Body of pancreas (tissue), 4 donors: ENCODE measurements at regions of chr10 and their contacts with region 1.

Region 1: DNA sequence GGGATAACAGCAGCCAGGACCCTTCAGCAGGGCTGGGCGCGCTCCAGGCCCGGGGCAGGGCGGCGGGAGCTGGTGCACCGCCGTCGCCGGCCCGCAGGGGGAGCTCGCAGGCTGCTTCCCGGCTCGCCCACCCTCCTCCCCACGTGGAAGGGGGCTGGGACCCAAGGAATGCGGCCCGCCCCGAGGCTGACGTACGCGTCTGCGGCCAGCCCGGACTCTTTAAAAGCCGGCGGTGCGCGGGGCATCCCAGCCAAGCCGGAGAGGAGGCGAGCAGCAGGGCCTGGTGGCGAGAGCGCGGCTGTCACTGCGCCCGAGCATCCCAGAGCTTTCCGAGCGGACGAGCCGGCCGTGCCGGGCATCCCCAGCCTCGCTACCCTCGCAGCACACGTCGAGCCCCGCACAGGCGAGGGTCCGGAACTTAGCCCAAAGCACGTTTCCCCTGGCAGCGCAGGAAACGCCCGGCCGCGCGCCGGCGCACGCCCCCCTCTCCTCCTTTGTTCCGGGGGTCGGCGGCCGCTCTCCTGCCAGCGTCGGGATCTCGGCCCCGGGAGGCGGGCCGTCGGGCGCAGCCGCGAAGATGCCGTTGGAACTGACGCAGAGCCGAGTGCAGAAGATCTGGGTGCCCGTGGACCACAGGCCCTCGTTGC is at the start of gene PFKFB3:
- DNase-seq: peak; percentile 95 to 97 (median 96)
- ATAC-seq: peak; percentile 88
- H3K4me3 ChIP-seq: peak within 1 kb of the TSS; percentile 28 to 80
- H3K27ac ChIP-seq: peak within 1 kb of the TSS; percentile 87 to 95 (median 92)
- H3K4me1 ChIP-seq: peaks cover 57% of the 10 kb centered on the region
- H3K27me3 ChIP-seq: no peaks in the 10 kb centered on the region
- CTCF ChIP-seq: peak; percentile 94 to 99 (median 99)
- POLR2A ChIP-seq: peak; percentile 99
- total RNA-seq, gene PFKFB3: 26.5 to 137 TPM

Region 2: DNA sequence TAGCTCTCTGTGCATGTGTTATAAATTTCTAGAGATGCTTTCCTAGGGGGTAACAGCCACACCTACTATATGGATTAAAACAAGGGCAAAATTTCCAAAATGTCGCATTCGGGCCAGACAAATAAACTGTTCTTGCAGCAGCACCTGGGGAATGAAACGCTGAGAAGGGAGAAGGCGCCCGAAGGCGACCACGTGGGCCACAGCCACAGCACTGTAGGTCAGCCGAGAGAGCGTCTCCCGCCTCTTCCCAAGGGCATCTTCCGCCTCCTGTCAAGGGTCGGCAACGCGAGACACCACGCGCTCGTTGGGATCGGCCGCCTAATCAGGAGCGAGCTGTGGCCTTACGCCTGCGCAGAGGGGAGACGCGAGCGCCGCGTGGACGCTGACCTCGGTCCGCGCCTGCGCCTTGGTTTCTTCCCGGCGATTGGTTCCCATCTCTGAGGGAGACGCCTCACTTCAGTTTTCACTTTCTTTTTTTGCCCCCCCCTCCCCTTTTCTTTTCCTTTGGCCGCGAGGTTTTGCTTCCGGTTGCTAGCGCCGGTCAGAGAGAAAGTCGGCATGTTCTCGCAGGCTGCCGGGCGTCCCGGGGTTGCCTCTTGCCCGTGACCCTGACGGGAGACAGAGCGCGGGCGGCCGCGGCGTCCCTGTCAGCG is 518.4 kb before region 1 on chr10 and contains the start of gene TASOR2:
- intact Hi-C with region 1: no loop called
- DNase-seq: peak; percentile 98
- ATAC-seq: peak; percentile 99
- H3K4me3 ChIP-seq: peak within 1 kb of the TSS; percentile 53 to 96
- H3K27ac ChIP-seq: peak within 1 kb of the TSS; percentile 66 to 92 (median 78)
- H3K4me1 ChIP-seq: peaks cover 16% of the 10 kb centered on the region
- H3K27me3 ChIP-seq: no peaks in the 10 kb centered on the region
- CTCF ChIP-seq: no peak
- POLR2A ChIP-seq: peak; percentile 43 to 73 (median 67)
- total RNA-seq, gene TASOR2: 47.2 to 114 TPM

Region 3: GRCh38 chr10:5927306-5927705 is 275.5 kb before region 1 on chr10:
- intact Hi-C with region 1: no loop called
- DNase-seq: no peak
- ATAC-seq: no peak
- H3K4me3 ChIP-seq: no peak overlapping the region
- H3K27ac ChIP-seq: no peak overlapping the region
- H3K4me1 ChIP-seq: no peaks in the 10 kb centered on the region
- H3K27me3 ChIP-seq: no peaks in the 10 kb centered on the region
- CTCF ChIP-seq: no peak
- POLR2A ChIP-seq: no peak

Region 4: DNA sequence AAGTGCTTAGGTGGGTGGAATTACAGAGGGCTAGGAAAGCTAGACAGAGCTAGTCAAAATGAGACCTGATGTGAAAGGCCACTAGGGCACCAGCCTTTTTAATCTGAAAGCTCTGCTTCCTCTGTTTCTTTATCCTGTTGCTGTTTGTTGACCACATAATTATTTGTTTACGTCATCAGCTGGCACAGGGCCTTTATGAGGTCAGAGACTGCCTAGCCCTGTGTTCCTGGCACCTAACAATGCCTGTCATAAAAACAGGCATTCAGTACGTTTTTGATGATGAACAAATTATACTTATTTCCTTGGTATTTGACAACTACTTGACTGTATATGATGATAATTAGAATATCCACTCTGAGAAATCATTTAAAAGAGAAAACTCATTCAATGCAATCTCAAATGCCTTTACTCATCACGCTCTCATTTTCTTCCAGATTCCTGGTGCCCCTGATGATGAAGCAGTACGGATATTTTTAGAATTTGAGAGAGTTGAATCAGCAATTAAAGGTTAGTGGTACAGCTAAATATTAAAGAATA is 87.9 kb before region 1 on chr10:
- intact Hi-C with region 1: no loop called
- DNase-seq: peak; percentile 29 to 60 (median 48)
- ATAC-seq: peak; percentile 59
- H3K4me3 ChIP-seq: no peak overlapping the region
- H3K27ac ChIP-seq: peak overlapping the region in 1 of 4 donors; percentile 32
- H3K4me1 ChIP-seq: peaks cover 14% of the 10 kb centered on the region
- H3K27me3 ChIP-seq: no peaks in the 10 kb centered on the region
- CTCF ChIP-seq: no peak
- POLR2A ChIP-seq: no peak

Region 5: GRCh38 chr10:6164271-6165095 is 38.3 kb before region 1 on chr10:
- intact Hi-C with region 1: loop called (anchors 5 kb)
- DNase-seq: no peak
- ATAC-seq: peak; percentile 6
- H3K4me3 ChIP-seq: peak overlapping the region; percentile 31 to 69
- H3K27ac ChIP-seq: peak overlapping the region; percentile 88 to 96 (median 96)
- H3K4me1 ChIP-seq: peaks cover 37% of the 10 kb centered on the region
- H3K27me3 ChIP-seq: no peaks in the 10 kb centered on the region
- CTCF ChIP-seq: no peak
- POLR2A ChIP-seq: no peak

Region 6: GRCh38 chr10:6275022-6275997 is 72.5 kb after region 1 on chr10:
- intact Hi-C with region 1: no loop called
- DNase-seq: peak; percentile 51 to 90 (median 70)
- ATAC-seq: peak; percentile 66
- H3K4me3 ChIP-seq: no peak overlapping the region
- H3K27ac ChIP-seq: peak overlapping the region in 2 of 4 donors; percentile 49 to 70
- H3K4me1 ChIP-seq: peaks cover 14% of the 10 kb centered on the region
- H3K27me3 ChIP-seq: no peaks in the 10 kb centered on the region
- CTCF ChIP-seq: no peak
- POLR2A ChIP-seq: no peak

Region 7: DNA sequence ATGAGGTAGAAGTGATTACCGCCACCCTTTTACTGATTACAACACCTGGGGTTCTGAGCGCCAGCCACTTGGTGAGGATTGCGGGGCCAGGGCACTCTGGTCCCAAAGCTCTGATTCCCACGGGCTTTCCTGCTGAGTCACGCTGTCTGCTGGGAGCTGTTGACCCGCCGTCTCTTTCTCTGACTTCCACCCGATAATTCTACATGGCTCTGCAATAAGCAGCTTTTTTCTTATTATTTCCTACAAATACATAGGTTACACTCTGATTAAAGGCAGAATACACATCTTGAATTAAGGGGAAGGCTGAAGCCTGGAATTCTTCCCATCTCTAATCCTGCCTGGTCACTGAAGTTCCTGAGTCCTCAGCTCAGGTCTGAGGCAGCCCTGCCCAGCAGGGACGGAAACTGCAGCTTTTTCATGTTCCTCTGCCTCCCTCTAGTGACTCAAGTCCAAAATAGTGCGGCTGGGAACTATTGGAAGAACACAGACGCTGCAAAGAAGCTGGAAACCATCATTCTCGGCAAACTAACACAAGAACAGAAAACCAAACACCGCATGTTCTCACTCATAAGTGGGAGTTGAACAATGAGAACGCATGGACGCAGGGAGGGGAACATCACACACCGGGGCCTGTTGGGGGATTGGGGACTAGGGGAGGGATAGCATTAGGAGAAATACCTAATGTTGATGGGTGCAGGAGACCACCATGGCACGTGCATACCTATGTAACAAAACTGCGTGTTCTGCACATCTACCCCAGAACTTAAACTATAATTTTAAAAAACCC is 198.9 kb after region 1 on chr10:
- intact Hi-C with region 1: loop called (anchors 5 kb)
- DNase-seq: peak; percentile 79 to 91 (median 86)
- ATAC-seq: peak; percentile 97
- H3K4me3 ChIP-seq: no peak overlapping the region
- H3K27ac ChIP-seq: peak overlapping the region in 3 of 4 donors; percentile 49 to 74 (median 60)
- H3K4me1 ChIP-seq: peaks cover 7% of the 10 kb centered on the region
- H3K27me3 ChIP-seq: no peaks in the 10 kb centered on the region
- CTCF ChIP-seq: peak; percentile 27 to 95 (median 94)
- POLR2A ChIP-seq: no peak